ENCODE measurements at regions of chr7 and their contacts with region 1.

Region 1: GRCh38 chr7:50112250-50112975 is 19.4 kb upstream of the ZPBP start:
- DNase-seq: no peak
- ATAC-seq: no peak
- H3K4me3 ChIP-seq: no peak overlapping the region
- H3K27ac ChIP-seq: no peak overlapping the region
- H3K4me1 ChIP-seq: no peaks in the 10 kb centered on the region
- H3K27me3 ChIP-seq: peaks cover 0 to 15% (median 0%) of the 10 kb centered on the region in 7 donors
- CTCF ChIP-seq: no peak

Region 2: DNA sequence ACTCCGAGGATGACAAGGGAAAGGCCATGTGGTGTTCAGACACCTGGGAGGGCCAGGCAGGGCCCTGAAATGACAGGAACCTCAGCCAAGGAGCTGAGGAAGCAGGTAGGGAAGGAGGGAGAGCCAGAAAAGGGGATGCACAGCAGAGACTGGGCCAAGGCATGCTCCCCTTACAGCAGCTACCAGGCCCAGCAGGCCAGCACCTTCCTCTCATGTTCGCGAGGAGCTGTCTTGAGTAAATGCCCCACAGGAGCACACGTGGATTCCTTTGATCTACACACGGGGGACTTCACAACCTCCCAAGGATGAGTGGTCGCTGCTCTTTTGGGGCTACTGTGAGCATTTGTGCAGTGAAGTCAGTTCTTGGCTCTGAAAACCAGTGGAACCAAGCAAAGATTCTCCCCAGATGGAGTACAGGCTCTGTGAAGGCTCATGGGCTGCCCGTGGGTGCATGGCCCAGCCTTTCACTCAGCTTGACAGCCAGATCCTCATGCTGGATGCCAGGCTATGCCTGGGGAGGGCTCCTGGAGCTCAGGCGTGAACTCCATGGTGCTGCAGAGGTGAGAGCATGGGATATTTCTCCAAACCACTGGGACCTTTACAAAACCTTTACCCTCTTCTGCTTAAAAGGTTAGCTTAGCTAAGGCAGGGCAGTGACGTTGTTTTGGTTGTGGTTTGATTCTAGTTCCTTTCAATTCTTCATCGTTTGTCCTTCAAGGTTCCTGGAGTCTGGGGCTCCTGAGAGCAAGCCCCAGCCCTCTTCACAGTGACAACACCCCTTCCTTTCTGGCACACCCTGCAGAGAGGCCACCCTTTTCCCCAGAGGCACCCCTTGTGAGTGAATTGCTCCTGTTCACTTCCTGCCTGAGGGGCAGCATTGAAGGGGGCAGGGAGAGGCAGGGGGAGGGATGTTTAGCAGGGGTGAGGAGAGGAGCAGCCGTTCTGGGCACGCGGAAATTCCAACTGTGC is 54.9 kb after region 1 on chr7:
- intact Hi-C with region 1: loop called in 2 of 10 experiments (anchors 2 to 10 kb)
- DNase-seq: no peak
- ATAC-seq: no peak
- H3K4me3 ChIP-seq: no peak overlapping the region
- H3K27ac ChIP-seq: no peak overlapping the region
- H3K4me1 ChIP-seq: peaks cover 0 to 4% (median 0%) of the 10 kb centered on the region in 9 donors
- H3K27me3 ChIP-seq: no peaks in the 10 kb centered on the region
- CTCF ChIP-seq: no peak